ENCODE measurements at regions of chr17 and their contacts with region 1.

Region 1: GRCh38 chr17:56592487-56593085 is 913 bp upstream of the NOG start:
- DNase-seq: peak; percentile 14 to 46
- ATAC-seq: peak; percentile 49 to 60
- H3K4me3 ChIP-seq: peak overlapping the region; percentile 58 to 89 (median 70)
- H3K27ac ChIP-seq: peak overlapping the region; percentile 82 to 93 (median 83)
- H3K4me1 ChIP-seq: peaks cover 10 to 27% of the 10 kb centered on the region in 2 donors
- H3K27me3 ChIP-seq: peaks cover 0 to 4% (median 3%) of the 10 kb centered on the region in 3 donors
- CTCF ChIP-seq: peak; percentile 81 to 100 (median 96)
- POLR2A ChIP-seq: no peak

Region 2: GRCh38 chr17:56172517-56172982 is 420.0 kb before region 1 on chr17:
- in situ Hi-C with region 1: no loop called
- intact Hi-C with region 1: loop called (anchors 5 kb)
- DNase-seq: peak; percentile 92 to 94
- ATAC-seq: peak; percentile 82 to 89
- H3K4me3 ChIP-seq: no peak overlapping the region
- H3K27ac ChIP-seq: peak overlapping the region; percentile 85 to 93 (median 86)
- H3K4me1 ChIP-seq: peaks cover 34 to 35% of the 10 kb centered on the region in 2 donors
- H3K27me3 ChIP-seq: no peaks in the 10 kb centered on the region
- CTCF ChIP-seq: no peak
- POLR2A ChIP-seq: peak in 1 of 2 donors; percentile 30

Region 3: DNA sequence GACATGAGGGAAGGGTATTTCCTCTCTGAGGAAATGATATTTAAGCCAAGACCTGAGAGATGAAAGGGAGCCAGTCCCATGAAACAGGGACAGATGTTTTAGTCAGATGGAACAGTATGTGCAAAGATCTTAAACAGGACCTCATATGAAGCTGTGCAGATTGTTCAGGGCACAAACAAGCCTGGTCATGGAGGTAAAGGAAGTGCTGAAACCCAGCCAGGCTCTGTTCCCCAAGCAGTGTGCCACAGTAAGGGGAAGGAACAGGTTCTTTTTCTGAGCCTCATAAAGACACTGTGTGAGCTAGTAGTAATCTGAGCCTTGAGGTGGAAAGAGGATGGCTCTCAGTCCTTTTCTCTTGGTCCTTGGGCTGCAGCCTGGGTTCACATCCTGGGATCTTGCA is 279.4 kb before region 1 on chr17:
- in situ Hi-C with region 1: no loop called
- intact Hi-C with region 1: no loop called
- DNase-seq: no peak
- ATAC-seq: no peak
- H3K4me3 ChIP-seq: no peak overlapping the region
- H3K27ac ChIP-seq: no peak overlapping the region
- H3K4me1 ChIP-seq: no peaks in the 10 kb centered on the region
- H3K27me3 ChIP-seq: no peaks in the 10 kb centered on the region
- CTCF ChIP-seq: no peak
- POLR2A ChIP-seq: no peak

Region 4: GRCh38 chr17:56679115-56679766 is 86.7 kb after region 1 on chr17:
- in situ Hi-C with region 1: no loop called
- intact Hi-C with region 1: loop called (anchors 1 kb)
- DNase-seq: no peak
- ATAC-seq: peak; percentile 38 to 63
- H3K4me3 ChIP-seq: peak overlapping the region; percentile 27 to 56 (median 38)
- H3K27ac ChIP-seq: no peak overlapping the region
- H3K4me1 ChIP-seq: peaks cover 4 to 10% of the 10 kb centered on the region in 2 donors
- H3K27me3 ChIP-seq: peaks cover 0 to 4% (median 0%) of the 10 kb centered on the region in 3 donors
- CTCF ChIP-seq: peak; percentile 24 to 67 (median 40)
- POLR2A ChIP-seq: no peak

Region 5: DNA sequence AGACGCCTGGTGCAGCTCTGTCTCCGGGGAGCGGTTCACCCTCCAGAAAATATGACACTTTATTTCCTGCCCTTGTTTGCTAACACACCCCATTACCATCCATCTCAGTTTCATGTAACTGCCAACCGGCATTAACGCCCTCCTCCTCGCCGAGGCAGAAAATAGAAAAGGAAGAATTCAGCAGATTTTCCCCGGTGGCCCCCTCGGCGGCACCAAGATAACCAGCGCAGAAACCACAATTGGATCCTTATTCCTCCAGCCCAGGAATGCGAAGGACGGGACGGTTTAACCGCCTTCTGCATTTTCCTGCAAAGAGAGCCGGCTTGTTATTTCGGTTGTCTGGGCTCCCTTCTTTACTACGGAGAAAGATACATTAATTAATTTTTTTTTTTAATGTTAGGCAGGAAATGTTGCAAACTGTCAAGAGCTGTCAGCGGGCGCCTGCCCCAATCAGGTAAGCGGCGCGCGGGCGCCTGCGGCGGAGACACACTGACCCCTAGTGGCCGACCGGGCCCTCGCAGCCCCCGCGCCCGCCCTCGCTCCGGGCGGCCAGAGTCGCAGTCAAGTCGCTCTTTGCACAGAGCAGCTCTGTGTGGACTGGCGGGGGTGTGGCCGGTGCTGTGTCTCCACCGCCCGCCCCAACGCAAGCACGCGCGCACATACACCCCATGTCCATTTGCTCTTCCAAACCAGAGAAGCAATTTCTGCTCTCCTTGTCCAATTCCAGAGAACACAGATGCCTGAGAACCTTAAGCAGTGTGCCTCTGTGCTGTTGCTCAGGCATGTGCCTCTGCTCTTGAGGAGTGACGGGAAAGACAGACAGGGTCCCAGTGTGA is 187.5 kb after region 1 on chr17:
- in situ Hi-C with region 1: no loop called
- intact Hi-C with region 1: loop called (anchors 1 kb)
- DNase-seq: peak; percentile 58 to 64
- ATAC-seq: peak; percentile 59 to 80
- H3K4me3 ChIP-seq: peak overlapping the region; percentile 39 to 61 (median 46)
- H3K27ac ChIP-seq: peak overlapping the region in 2 of 4 donors; percentile 36 to 78
- H3K4me1 ChIP-seq: peaks cover 21 to 46% of the 10 kb centered on the region in 2 donors
- H3K27me3 ChIP-seq: no peaks in the 10 kb centered on the region
- CTCF ChIP-seq: peak; percentile 82 to 99 (median 95)
- POLR2A ChIP-seq: no peak

Region 6: GRCh38 chr17:56960596-56961538 is 368.3 kb after region 1 on chr17 and contains the start of gene COIL:
- in situ Hi-C with region 1: loop called in 1 of 4 experiments (anchors 25 kb)
- intact Hi-C with region 1: no loop called
- DNase-seq: peak; percentile 81 to 87
- ATAC-seq: peak; percentile 97 to 99
- H3K4me3 ChIP-seq: peak within 1 kb of the TSS; percentile 74 to 86 (median 80)
- H3K27ac ChIP-seq: peak within 1 kb of the TSS; percentile 90 to 95 (median 91)
- H3K4me1 ChIP-seq: peaks cover 15 to 25% of the 10 kb centered on the region in 2 donors
- H3K27me3 ChIP-seq: no peaks in the 10 kb centered on the region
- CTCF ChIP-seq: peak; percentile 98 to 100 (median 99)
- POLR2A ChIP-seq: peak in 1 of 2 donors; percentile 41
- total RNA-seq, gene COIL: 6.3 to 9.7 (median 9.0) TPM

Measured in gastrocnemius medialis (tissue), 4 donors.